ENCODE measurements at regions of chrX and their contacts with region 1.

Region 1: GRCh38 chrX:43557792-43558191 is 98.3 kb upstream of the MAOA start:
- DNase-seq: peak; percentile 8 to 29
- ATAC-seq: peak in 1 of 8 donors; percentile 34
- H3K4me3 ChIP-seq: no peak overlapping the region
- H3K27ac ChIP-seq: no peak overlapping the region
- H3K4me1 ChIP-seq: no peaks in the 10 kb centered on the region
- H3K27me3 ChIP-seq: peaks cover 0 to 21% (median 0%) of the 10 kb centered on the region in 7 donors
- CTCF ChIP-seq: peak; percentile 35 to 74 (median 64)

Region 2: GRCh38 chrX:41561045-41561444 is 1996.7 kb before region 1 on chrX:
- intact Hi-C with region 1: loop called in 1 of 10 experiments (anchors 10 kb)
- DNase-seq: peak in 1 of 2 donors; percentile 31
- ATAC-seq: peak in 6 of 8 donors; percentile 68 to 91 (median 74)
- H3K4me3 ChIP-seq: no peak overlapping the region
- H3K27ac ChIP-seq: peak overlapping the region in 5 of 10 donors; percentile 48 to 77 (median 60)
- H3K4me1 ChIP-seq: peaks cover 0 to 31% (median 6%) of the 10 kb centered on the region in 9 donors
- H3K27me3 ChIP-seq: peaks cover 0 to 32% (median 0%) of the 10 kb centered on the region in 7 donors
- CTCF ChIP-seq: no peak

Region 3: DNA sequence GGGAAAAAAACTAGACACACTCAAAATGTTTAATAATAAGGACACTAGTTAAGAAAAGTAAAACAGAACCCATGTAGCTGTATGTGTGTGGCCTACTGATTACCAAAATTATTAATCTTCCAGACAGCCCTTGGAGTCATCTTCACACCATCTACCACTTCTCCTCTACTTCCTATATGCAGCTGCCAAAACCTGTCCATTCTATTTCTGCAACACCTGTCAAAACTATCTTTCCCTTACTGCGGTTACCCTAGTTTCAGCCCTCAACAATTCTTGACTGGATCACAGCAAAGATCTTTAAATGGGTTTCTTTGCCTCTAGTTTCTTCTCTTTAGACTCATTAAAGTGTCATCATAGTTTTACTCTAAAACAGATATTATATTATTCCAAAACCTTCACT is 1761.2 kb before region 1 on chrX:
- intact Hi-C with region 1: loop called in 7 of 10 experiments (anchors 5 to 10 kb)
- DNase-seq: no peak
- ATAC-seq: no peak
- H3K4me3 ChIP-seq: no peak overlapping the region
- H3K27ac ChIP-seq: no peak overlapping the region
- H3K4me1 ChIP-seq: peaks cover 0 to 5% (median 0%) of the 10 kb centered on the region in 9 donors
- H3K27me3 ChIP-seq: peaks cover 0 to 52% (median 0%) of the 10 kb centered on the region in 7 donors
- CTCF ChIP-seq: no peak

Region 4: DNA sequence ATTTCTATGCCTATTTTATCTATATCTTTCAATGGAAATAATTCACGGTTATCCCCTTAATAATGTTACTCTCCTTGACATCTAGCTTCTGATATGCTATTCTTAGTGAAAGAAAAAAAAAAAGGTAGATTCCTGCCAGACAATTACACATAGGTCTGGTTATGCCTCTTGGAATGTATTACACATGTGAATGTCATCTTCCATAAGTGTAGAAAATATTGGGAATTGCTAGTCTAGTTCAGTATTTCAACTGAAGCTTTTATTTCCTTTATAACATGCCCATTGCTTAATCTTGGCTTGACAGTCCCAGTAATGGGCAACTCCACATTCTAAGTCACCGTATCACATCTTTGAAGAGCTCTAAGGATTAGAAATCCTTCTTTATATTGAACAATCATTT is 754.5 kb before region 1 on chrX:
- intact Hi-C with region 1: no loop called
- DNase-seq: no peak
- ATAC-seq: no peak
- H3K4me3 ChIP-seq: no peak overlapping the region
- H3K27ac ChIP-seq: no peak overlapping the region
- H3K4me1 ChIP-seq: no peaks in the 10 kb centered on the region
- H3K27me3 ChIP-seq: peaks cover 0 to 27% (median 0%) of the 10 kb centered on the region in 7 donors
- CTCF ChIP-seq: no peak

Region 5: DNA sequence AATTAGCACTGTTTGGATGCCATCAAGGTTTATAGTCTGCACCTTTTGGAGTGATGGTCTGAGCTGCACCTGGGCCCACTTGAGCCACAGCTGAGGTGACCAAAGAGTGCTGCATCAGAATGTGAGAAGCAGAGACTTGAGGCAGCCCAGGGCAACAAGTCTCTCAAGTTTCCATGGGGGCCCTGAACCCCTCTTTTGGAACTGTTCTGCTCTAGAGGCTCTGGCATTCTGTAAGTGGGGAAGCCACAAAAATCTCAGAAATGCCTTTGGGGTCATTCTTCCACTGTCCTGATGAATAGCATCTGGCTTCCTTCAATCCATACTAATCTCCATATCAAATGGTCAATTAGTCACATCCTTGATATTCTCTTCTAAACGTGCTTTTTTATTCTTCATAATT is 200.1 kb before region 1 on chrX:
- intact Hi-C with region 1: loop called in 2 of 10 experiments (anchors 10 kb)
- DNase-seq: no peak
- ATAC-seq: no peak
- H3K4me3 ChIP-seq: no peak overlapping the region
- H3K27ac ChIP-seq: no peak overlapping the region
- H3K4me1 ChIP-seq: no peaks in the 10 kb centered on the region
- H3K27me3 ChIP-seq: peaks cover 0 to 15% (median 0%) of the 10 kb centered on the region in 7 donors
- CTCF ChIP-seq: no peak

Region 6: GRCh38 chrX:43618361-43619205 is 60.8 kb after region 1 on chrX:
- intact Hi-C with region 1: no loop called
- DNase-seq: no peak
- ATAC-seq: no peak
- H3K4me3 ChIP-seq: no peak overlapping the region
- H3K27ac ChIP-seq: no peak overlapping the region
- H3K4me1 ChIP-seq: no peaks in the 10 kb centered on the region
- H3K27me3 ChIP-seq: peaks cover 0 to 8% (median 0%) of the 10 kb centered on the region in 7 donors
- CTCF ChIP-seq: no peak

Region 7: GRCh38 chrX:43750248-43750676 is 192.5 kb after region 1 on chrX:
- intact Hi-C with region 1: loop called in 9 of 10 experiments (anchors 1 to 5 kb)
- DNase-seq: peak in 1 of 2 donors; percentile 44
- ATAC-seq: peak; percentile 61 to 90 (median 85)
- H3K4me3 ChIP-seq: no peak overlapping the region
- H3K27ac ChIP-seq: no peak overlapping the region
- H3K4me1 ChIP-seq: peaks cover 0 to 8% (median 0%) of the 10 kb centered on the region in 9 donors
- H3K27me3 ChIP-seq: peaks cover 0 to 13% (median 0%) of the 10 kb centered on the region in 7 donors
- CTCF ChIP-seq: peak; percentile 23 to 67 (median 56)

Measured in heart right ventricle (tissue), 16 donors.